ENCODE measurements at regions of chr9 and their contacts with region 1.

Region 1: DNA sequence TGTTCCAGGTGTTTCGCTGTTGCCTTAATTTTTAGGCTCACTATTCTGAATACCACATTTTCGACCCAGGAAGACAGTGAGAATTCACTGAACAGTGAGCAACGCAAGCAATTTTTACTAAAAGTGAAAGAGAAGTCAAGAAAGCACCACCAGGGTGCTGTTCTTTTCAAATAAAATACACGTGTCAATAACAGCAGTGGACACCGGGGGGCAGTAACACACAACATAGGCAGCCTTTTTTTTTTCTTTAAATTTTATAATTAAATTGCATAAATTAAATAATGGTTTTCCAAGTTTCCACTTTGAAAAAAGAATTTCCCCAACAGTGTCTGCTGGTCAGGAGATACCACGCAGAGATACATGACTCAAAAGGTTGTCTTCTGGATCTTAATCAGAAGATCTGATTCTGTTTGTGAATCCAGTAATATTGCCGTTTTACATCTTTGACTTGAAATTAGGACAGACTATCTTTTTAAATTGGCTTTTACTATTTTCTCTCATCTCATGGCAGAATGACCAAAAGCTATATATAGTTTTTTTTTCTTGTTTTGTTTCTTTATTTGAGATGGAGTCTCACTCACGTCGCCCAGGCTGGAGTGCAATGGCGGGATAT is 47.1 kb upstream of the SH3GL2 start:
- DNase-seq: peak; percentile 29
- H3K4me3 ChIP-seq: no peak overlapping the region
- H3K27ac ChIP-seq: no peak overlapping the region
- H3K4me1 ChIP-seq: no peaks in the 10 kb centered on the region
- CTCF ChIP-seq: peak; percentile 83

Region 2: DNA sequence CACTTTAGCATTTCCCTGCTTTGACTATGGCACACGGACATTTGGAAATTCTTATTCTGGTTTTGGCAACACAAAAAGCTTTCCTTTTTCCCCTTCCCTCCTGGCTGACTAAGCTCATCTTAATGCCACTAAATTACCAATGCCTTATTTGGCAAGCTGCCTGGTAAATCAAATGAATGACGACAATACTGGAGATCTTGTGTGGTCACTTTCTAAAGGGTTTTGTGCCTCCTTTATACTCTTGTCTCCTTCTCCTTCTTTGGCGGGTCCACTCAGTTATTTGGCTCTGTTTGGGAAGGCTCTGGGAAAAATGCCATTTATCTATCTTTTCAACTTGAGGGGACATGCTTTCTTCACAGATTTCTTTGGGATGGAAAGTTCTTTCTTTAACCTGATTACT is 82.0 kb after region 1 on chr9:
- CTCF ChIA-PET with region 1: no interaction called
- POLR2A ChIA-PET with region 1: no interaction called
- intact Hi-C with region 1: loop called (anchors 10 kb)
- DNase-seq: no peak
- H3K4me3 ChIP-seq: no peak overlapping the region
- H3K27ac ChIP-seq: no peak overlapping the region
- H3K4me1 ChIP-seq: no peaks in the 10 kb centered on the region
- CTCF ChIP-seq: no peak

Region 3: DNA sequence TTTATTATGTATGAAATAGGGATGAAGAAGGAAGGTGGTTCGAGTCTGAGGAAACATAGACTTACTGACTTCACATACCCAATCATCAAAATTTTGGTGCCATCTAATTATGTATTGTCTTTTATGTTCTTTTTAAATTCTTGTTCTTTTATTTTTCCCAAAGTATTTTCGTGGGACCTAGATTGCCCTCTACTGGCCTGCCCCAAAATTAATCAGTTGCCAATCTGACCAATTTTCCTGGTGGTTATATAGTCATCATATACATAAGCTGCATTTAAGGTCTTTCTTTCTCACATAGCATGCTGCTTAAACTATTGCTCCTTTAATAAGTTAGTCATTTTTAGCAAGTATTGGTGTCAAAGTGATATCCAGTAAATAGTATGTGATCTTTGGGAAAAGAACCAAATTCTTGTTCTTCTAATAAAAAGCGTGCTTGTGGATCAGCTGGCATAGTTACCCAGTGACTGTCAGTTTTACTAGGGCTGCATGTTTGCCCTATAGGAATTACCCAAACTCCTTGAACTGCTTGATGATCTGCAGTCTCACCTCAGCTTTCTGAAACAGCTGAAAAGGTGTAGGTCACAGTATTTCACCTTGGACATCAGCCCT is 270.6 kb after region 1 on chr9:
- CTCF ChIA-PET with region 1: no interaction called
- POLR2A ChIA-PET with region 1: no interaction called
- intact Hi-C with region 1: loop called (anchors 2 kb)
- DNase-seq: peak; percentile 6
- H3K4me3 ChIP-seq: no peak overlapping the region
- H3K27ac ChIP-seq: no peak overlapping the region
- H3K4me1 ChIP-seq: no peaks in the 10 kb centered on the region
- CTCF ChIP-seq: peak; percentile 76

Region 4: GRCh38 chr9:18208154-18209059 is 676.7 kb after region 1 on chr9:
- CTCF ChIA-PET with region 1: no interaction called
- POLR2A ChIA-PET with region 1: no interaction called
- intact Hi-C with region 1: loop called (anchors 5 kb)
- DNase-seq: peak; percentile 4
- H3K4me3 ChIP-seq: no peak overlapping the region
- H3K27ac ChIP-seq: no peak overlapping the region
- H3K4me1 ChIP-seq: no peaks in the 10 kb centered on the region
- CTCF ChIP-seq: peak; percentile 66